CD8-positive, alpha-beta T cell (primary cell): ENCODE measurements at regions of chr15 and their contacts with region 1.

Region 1: DNA sequence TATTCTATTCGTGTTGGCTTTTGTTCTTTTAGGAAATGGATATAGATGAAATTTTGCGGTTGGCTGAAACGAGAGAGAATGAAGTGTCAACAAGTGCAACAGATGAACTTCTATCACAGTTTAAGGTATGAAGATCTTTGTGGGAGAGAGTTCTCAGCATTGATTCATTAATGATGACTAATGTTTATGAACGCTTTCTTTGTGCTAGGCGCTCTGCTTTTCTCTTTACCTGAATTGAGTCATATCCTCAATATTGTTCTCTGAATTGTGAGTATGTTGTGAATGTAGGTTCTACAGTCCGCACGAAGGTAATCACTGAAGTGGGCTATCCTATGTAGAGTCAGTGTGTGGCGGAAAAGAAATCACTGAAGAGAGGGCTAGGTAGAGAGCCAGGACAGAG is 81.2 kb downstream of the CHD2 start:
- DNase-seq: no peak
- ATAC-seq: no peak
- H3K4me3 ChIP-seq: no peak overlapping the region
- H3K4me3 Mint-ChIP-seq: no peak overlapping the region
- H3K27ac ChIP-seq: no peak overlapping the region
- H3K27ac Mint-ChIP-seq: no peak overlapping the region
- H3K4me1 ChIP-seq: no peaks in the 10 kb centered on the region
- H3K4me1 Mint-ChIP-seq: peaks cover 24% of the 10 kb centered on the region
- H3K27me3 ChIP-seq: no peaks in the 10 kb centered on the region
- H3K27me3 Mint-ChIP-seq: no peaks in the 10 kb centered on the region
- CTCF ChIP-seq: no peak

Region 2: DNA sequence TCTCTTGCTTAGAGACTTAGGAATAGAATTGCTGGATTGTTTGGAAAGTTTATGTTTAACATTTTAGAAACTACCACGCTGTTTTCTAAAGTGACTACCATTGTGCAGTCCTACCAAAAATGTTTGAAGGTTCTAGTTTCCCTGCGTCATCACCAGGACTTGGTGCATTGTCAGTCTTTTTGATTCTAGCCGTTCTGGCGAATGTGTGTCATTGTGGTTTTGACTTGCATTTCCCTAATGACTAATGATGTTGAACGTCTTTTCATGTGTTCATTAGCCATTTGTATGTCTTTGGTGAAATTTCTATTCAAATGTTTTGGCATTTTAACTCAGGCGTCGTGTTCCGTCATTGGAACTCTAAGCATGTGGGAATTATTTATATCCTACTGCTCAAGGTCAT is 23.2 kb before region 1 on chr15:
- CTCF ChIA-PET with region 1: interaction called, 4 read pairs
- POLR2A ChIA-PET with region 1: no interaction called
- intact Hi-C with region 1: loop called in 1 of 2 experiments (anchors 2 kb)
- DNase-seq: peak in 6 of 9 experiments; percentile 25 to 76 (median 50)
- ATAC-seq: peak; percentile 90
- H3K4me3 ChIP-seq: no peak overlapping the region
- H3K4me3 Mint-ChIP-seq: peak overlapping the region; percentile 4
- H3K27ac ChIP-seq: peak overlapping the region in 1 of 2 experiments; percentile 27
- H3K27ac Mint-ChIP-seq: peak overlapping the region; percentile 89
- H3K4me1 ChIP-seq: peaks cover 5% of the 10 kb centered on the region
- H3K4me1 Mint-ChIP-seq: peaks cover 50% of the 10 kb centered on the region
- H3K27me3 ChIP-seq: no peaks in the 10 kb centered on the region
- H3K27me3 Mint-ChIP-seq: no peaks in the 10 kb centered on the region
- CTCF ChIP-seq: no peak

Region 3: GRCh38 chr15:93001881-93002280 is 20.5 kb after region 1 on chr15:
- CTCF ChIA-PET with region 1: no interaction called
- POLR2A ChIA-PET with region 1: interaction called, 3 read pairs
- intact Hi-C with region 1: loop called in 1 of 2 experiments (anchors 2 kb)
- DNase-seq: no peak
- ATAC-seq: no peak
- H3K4me3 ChIP-seq: no peak overlapping the region
- H3K4me3 Mint-ChIP-seq: no peak overlapping the region
- H3K27ac ChIP-seq: no peak overlapping the region
- H3K27ac Mint-ChIP-seq: no peak overlapping the region
- H3K4me1 ChIP-seq: no peaks in the 10 kb centered on the region
- H3K4me1 Mint-ChIP-seq: peaks cover 22% of the 10 kb centered on the region
- H3K27me3 ChIP-seq: no peaks in the 10 kb centered on the region
- H3K27me3 Mint-ChIP-seq: no peaks in the 10 kb centered on the region
- CTCF ChIP-seq: no peak

Region 4: DNA sequence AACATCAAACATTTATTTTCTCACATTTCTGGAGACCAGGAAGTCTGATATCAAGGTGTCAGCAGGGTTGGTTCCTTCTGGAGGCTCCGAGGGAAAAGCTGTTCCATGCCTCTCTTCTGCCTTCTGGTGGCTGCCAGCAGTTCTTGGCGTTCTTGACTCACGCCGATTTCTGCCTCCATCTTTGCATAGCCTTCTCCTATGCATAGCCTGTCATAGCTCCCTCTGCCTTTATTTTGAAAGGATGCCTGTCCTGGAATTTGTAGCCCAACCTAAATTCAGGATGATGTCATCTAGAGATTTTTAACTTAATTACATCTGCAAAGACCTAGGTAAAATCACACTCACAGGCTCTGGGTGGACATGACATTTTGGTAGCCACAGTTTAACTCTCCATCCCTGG is 37.2 kb after region 1 on chr15:
- CTCF ChIA-PET with region 1: no interaction called
- POLR2A ChIA-PET with region 1: no interaction called
- intact Hi-C with region 1: loop called (anchors 5 kb)
- DNase-seq: no peak
- ATAC-seq: no peak
- H3K4me3 ChIP-seq: no peak overlapping the region
- H3K4me3 Mint-ChIP-seq: no peak overlapping the region
- H3K27ac ChIP-seq: no peak overlapping the region
- H3K27ac Mint-ChIP-seq: peak overlapping the region; percentile 58
- H3K4me1 ChIP-seq: peaks cover 5% of the 10 kb centered on the region
- H3K4me1 Mint-ChIP-seq: peaks cover 49% of the 10 kb centered on the region
- H3K27me3 ChIP-seq: no peaks in the 10 kb centered on the region
- H3K27me3 Mint-ChIP-seq: no peaks in the 10 kb centered on the region
- CTCF ChIP-seq: no peak

Region 5: GRCh38 chr15:93438310-93438709 is 457.0 kb after region 1 on chr15:
- CTCF ChIA-PET with region 1: no interaction called
- POLR2A ChIA-PET with region 1: no interaction called
- intact Hi-C with region 1: no loop called
- DNase-seq: no peak
- ATAC-seq: no peak
- H3K4me3 ChIP-seq: no peak overlapping the region
- H3K4me3 Mint-ChIP-seq: no peak overlapping the region
- H3K27ac ChIP-seq: no peak overlapping the region
- H3K27ac Mint-ChIP-seq: no peak overlapping the region
- H3K4me1 ChIP-seq: no peaks in the 10 kb centered on the region
- H3K4me1 Mint-ChIP-seq: no peaks in the 10 kb centered on the region
- H3K27me3 ChIP-seq: no peaks in the 10 kb centered on the region
- H3K27me3 Mint-ChIP-seq: peaks cover 33% of the 10 kb centered on the region
- CTCF ChIP-seq: no peak

Region 6: GRCh38 chr15:94008104-94009074 is 1027.1 kb after region 1 on chr15:
- CTCF ChIA-PET with region 1: no interaction called
- POLR2A ChIA-PET with region 1: no interaction called
- intact Hi-C with region 1: no loop called
- DNase-seq: no peak
- ATAC-seq: no peak
- H3K4me3 ChIP-seq: no peak overlapping the region
- H3K4me3 Mint-ChIP-seq: no peak overlapping the region
- H3K27ac ChIP-seq: no peak overlapping the region
- H3K27ac Mint-ChIP-seq: no peak overlapping the region
- H3K4me1 ChIP-seq: no peaks in the 10 kb centered on the region
- H3K4me1 Mint-ChIP-seq: peaks cover 2% of the 10 kb centered on the region
- H3K27me3 ChIP-seq: no peaks in the 10 kb centered on the region
- H3K27me3 Mint-ChIP-seq: peaks cover 2% of the 10 kb centered on the region
- CTCF ChIP-seq: no peak